ENCODE measurements at regions of chr17 and their contacts with region 1.

Region 1: GRCh38 chr17:17269926-17270773 is 10.9 kb downstream of the COPS3 start:
- H3K4me3 ChIP-seq: no peak overlapping the region
- H3K27ac ChIP-seq: no peak overlapping the region
- H3K4me1 ChIP-seq: no peaks in the 10 kb centered on the region
- CTCF ChIP-seq: no peak

Region 2: DNA sequence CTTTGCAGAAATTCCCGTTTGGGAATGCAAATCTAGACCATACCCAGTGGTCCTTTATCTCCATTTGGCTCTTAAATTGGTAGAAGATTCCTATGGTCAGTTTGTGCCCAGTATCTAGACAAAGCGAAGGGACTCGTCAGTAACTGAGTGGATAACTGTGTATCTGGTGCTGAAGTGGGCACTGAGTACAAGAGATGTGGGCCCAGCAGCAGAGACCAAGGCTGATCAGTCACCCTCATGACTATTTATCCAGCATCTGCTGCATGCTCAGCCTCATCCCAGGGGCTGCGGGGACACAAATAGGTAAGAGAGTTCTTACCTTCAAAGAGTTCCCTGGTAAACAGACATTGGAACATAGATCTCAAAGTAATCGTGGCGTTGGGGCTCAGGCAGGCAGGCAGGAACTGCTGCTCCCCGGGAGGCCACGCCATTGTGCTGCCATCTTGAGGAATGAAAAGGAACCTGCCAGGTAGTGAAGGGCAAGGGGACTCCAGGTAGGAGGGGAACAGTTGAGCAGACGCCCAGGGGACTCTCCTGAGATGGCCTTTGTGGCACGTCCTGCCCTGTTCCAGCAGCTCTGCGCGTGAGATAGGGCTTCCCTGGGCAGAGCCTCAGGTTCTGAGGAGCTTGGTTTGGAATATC is 43.3 kb after region 1 on chr17:
- CTCF ChIA-PET with region 1: interaction called, 12 read pairs
- POLR2A ChIA-PET with region 1: interaction called, 5 read pairs
- H3K4me3 ChIP-seq: no peak overlapping the region
- H3K27ac ChIP-seq: no peak overlapping the region
- H3K4me1 ChIP-seq: peaks cover 4% of the 10 kb centered on the region
- CTCF ChIP-seq: no peak; the same call in 1 of the 2 replicates

Measured in HEK293 (cell line).